A673 (cell line): ENCODE measurements at regions of chr12 and their contacts with region 1.

Region 1: DNA sequence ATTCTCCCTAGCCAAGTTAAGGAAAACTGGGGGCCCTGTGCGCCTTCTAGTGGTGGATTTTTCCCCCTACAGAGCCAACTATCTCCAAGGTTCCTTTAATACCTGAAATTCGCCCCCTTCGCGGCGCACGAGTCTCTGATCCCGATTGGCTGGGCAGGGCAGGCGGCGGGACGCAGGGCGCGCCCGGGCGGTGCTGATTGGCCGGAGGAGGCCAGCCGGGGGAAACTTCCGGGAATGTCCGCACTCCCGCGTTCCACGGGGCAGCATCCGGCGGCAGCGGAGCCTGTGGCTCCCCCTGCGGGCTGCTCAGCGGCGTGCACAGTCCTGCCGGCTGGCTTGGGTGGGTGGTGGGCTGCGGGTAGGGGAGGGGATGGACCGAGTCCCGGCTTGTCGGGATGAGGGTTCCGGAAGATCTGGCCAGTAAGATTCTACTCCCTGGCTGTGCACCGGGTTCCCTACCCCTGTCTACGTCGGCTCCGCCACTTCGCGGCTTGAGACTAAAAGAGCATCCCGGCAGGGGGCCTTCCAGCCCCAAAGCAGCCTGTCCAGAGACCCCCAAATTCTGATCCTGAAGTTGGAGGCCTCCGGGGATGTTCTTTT is at the start of gene NABP2:
- DNase-seq: peak; percentile 99
- H3K4me3 ChIP-seq: peak within 1 kb of the TSS; percentile 65
- H3K27ac ChIP-seq: peak within 1 kb of the TSS; percentile 72
- H3K4me1 ChIP-seq: peaks cover 5% of the 10 kb centered on the region
- H3K27me3 ChIP-seq: no peaks in the 10 kb centered on the region
- CTCF ChIP-seq: peak; percentile 98
- total RNA-seq, gene NABP2: 67.5 and 73.2 TPM in 2 replicates

Region 2: DNA sequence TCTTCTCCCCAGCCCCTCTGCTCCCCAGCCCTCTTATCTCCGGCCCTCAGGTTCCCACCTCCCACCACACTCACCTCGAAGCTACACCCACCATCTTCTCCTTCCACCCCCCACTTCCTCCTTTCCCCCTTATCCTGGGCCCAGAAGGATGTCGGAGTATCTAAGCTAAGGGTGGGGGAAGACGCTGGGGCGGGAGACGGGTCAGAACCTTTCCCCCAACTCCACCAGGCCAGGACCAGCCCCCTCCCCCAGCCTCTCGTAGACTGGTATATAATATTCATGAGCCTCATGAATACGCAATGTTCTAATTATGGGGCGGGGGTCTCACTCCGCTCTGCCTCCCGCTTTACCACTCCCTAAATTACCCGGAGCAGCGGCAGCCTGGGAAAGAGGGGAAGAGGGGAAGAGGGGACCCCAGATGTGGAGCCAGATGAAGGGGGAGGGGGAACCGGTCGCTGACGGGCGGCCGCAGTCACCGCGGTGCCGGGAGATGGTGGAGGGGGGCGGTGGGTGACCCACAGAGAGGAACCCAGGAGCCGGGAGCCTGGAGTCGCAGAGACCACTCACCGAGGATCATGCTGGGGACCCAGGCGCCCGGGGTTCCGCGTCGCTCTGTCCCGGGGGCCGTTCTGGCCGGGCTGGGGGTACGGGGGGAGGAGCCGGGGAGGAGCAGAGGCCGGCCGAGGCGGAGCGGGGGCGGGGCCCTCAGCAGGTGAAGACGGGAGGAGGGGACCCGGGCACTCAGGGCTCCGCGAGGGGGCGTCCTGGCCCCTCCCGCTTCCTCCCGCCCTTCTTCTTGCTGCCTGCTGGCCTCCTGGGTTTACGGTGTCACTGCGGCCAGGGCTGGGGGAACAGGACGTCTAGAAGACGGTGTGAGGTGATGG is 1833.3 kb before region 1 on chr12:
- CTCF ChIA-PET with region 1: no interaction called
- POLR2A ChIA-PET with region 1: interaction called, 18 read pairs
- intact Hi-C with region 1: no loop called
- DNase-seq: peak; percentile 69
- H3K4me3 ChIP-seq: peak overlapping the region; percentile 58
- H3K27ac ChIP-seq: peak overlapping the region; percentile 19
- H3K4me1 ChIP-seq: peaks cover 47% of the 10 kb centered on the region
- H3K27me3 ChIP-seq: no peaks in the 10 kb centered on the region
- CTCF ChIP-seq: peak; percentile 49

Region 3: GRCh38 chr12:55940065-55940732 is 284.0 kb before region 1 on chr12:
- CTCF ChIA-PET with region 1: no interaction called
- POLR2A ChIA-PET with region 1: no interaction called
- intact Hi-C with region 1: no loop called
- DNase-seq: peak; percentile 85
- H3K4me3 ChIP-seq: no peak overlapping the region
- H3K27ac ChIP-seq: no peak overlapping the region
- H3K4me1 ChIP-seq: no peaks in the 10 kb centered on the region
- H3K27me3 ChIP-seq: no peaks in the 10 kb centered on the region
- CTCF ChIP-seq: peak; percentile 95

Region 4: DNA sequence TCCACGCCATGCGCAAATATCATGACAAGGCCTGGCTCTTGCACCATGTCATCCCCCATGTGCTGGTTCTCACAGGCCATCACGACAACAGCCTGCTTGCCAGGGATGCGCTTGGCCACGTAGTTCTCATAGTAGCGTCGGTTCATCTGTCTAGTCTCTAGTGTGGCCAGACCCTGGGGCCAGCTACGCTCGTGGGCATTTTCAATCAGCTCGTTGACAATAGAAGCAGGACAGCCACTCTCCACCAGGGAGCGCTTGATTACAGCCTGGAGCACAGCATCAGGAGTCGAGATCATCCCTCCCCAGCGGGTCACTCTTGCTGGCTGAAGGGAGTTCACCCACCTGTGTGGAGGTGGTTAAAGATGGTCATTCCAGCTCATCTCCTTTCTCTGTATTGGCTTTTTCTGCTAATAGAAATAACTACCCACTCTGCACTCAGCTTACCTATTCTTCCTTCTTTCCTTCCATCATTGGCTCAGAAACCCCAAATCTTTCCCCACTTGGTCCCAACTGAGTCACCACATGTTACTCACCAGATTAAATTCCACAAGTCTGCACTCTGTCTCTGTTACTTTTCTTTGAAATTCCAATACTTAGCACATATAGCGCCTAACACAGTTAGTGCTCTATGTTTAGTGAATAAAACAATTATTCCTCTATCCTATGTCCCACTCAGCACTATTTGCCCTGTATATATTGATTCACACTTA is 17.6 kb before region 1 on chr12:
- CTCF ChIA-PET with region 1: interaction called, 17 read pairs
- POLR2A ChIA-PET with region 1: interaction called, 3 read pairs
- intact Hi-C with region 1: no loop called
- DNase-seq: peak; percentile 56
- H3K4me3 ChIP-seq: no peak overlapping the region
- H3K27ac ChIP-seq: no peak overlapping the region
- H3K4me1 ChIP-seq: peaks cover 5% of the 10 kb centered on the region
- H3K27me3 ChIP-seq: no peaks in the 10 kb centered on the region
- CTCF ChIP-seq: peak; percentile 72

Region 5: DNA sequence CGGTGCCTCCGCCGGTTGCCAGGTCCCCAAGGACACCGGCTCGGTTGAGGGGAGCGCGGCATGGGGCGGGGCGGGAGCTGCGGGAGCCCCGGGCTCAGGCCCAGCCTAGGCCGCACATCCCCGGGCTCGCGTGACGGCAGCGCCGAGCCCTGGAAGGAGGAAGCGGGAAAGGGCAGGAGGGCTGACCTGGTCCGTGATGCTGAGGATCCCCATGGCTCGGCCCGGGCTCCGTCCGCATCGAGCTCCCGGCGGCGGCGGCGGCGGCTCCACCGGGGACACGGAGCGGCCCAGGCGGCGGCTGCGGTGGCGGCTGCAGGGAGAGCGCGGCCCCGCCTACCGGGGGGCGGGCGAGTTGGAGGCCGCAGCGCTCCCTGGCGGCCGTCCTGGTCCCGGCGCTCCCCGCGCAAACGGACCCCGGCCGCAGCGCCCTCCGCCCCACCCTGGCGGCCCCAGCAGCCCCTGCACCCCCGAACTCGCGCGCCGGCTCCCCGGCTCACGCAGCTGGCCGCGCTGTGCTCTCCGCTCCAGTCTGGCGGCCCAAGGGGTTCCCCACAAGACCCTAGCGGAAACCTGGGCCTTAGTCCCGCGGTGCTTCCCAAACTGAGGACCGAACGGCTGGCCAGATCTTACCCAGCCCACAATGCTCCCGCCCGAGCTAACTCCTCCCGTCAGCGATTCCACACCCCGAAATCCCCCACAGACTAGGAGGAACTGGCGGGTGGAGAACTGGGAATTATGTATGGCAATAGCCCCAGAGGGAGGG is 34.0 kb after region 1 on chr12 and contains the start of gene ANKRD52:
- CTCF ChIA-PET with region 1: no interaction called
- POLR2A ChIA-PET with region 1: interaction called, 3 read pairs
- intact Hi-C with region 1: loop called (anchors 5 kb)
- DNase-seq: peak; percentile 89
- H3K4me3 ChIP-seq: peak within 1 kb of the TSS; percentile 99
- H3K27ac ChIP-seq: peak within 1 kb of the TSS; percentile 91
- H3K4me1 ChIP-seq: peaks cover 20% of the 10 kb centered on the region
- H3K27me3 ChIP-seq: no peaks in the 10 kb centered on the region
- CTCF ChIP-seq: peak; percentile 54; the same call in 1 of the 2 replicates
- total RNA-seq, gene ANKRD52: 74.6 and 74.7 TPM in 2 replicates